ENCODE measurements at regions of chr12 and their contacts with region 1.

Region 1: GRCh38 chr12:78494911-78495310 is 369.7 kb upstream of the SYT1 start:
- DNase-seq: peak; percentile 32
- H3K4me3 ChIP-seq: no peak overlapping the region
- H3K27ac ChIP-seq: no peak overlapping the region
- H3K4me1 ChIP-seq: peaks cover 8% of the 10 kb centered on the region
- H3K27me3 ChIP-seq: no peaks in the 10 kb centered on the region
- CTCF ChIP-seq: no peak

Region 2: GRCh38 chr12:78447373-78447772 is 47.5 kb before region 1 on chr12:
- CTCF ChIA-PET with region 1: no interaction called
- dilution Hi-C with region 1: loop called (anchors 5 kb)
- in situ Hi-C with region 1: no loop called
- intact Hi-C with region 1: no loop called
- DNase-seq: no peak
- H3K4me3 ChIP-seq: no peak overlapping the region
- H3K27ac ChIP-seq: no peak overlapping the region
- H3K4me1 ChIP-seq: no peaks in the 10 kb centered on the region
- H3K27me3 ChIP-seq: peaks cover 2% of the 10 kb centered on the region
- CTCF ChIP-seq: no peak